ENCODE measurements at regions of chr19 and their contacts with region 1.

Region 1: DNA sequence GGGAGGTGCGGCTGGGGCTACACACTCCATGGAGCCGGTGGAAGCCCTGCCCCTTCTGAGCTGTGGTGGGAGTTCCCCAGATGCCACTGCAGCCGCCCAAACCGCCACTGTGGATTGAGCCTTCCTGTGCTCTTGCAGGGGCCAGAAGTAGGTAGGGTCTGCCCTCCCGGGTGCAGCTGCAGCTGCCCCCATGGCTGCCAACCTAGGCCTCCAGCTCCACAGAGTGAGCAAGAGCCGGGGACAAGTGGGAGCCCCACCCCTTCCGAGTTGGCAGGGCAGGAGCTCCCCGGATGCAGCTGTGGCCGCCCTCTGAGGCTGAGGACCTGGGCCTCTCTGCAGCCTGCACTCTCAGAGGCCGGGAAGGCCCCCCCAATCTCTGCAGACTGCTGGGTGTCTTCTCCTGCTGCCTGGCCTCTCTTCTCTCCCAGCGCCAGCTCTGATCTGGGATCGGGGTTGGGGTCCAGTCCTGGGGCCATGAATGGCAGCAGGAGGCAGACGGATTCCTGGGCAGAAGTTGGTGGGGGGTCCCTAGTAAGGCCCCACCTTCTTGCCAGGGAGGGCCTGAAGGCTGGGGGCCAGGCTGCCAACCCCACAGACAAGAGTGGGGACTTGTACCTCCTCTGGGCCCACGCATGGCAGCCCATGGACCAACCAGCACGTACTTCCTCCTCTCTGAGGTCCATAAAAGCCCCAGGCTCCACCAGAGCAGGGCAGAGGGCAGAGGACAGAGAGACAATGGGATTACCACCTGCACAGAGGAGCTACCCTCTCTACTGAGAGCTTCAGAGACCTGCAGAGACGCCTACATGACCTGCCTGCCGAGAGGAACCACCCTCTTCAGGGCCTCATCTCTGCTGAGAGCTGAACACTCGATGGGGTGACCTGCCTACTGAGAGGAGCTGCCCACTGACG is 28.9 kb downstream of the AP2S1 start:
- DNase-seq: no peak
- ATAC-seq: peak; percentile 81
- H3K4me3 ChIP-seq: peak overlapping the region; percentile 33; the same call in 1 of the 2 replicates
- H3K27ac ChIP-seq: peak overlapping the region; percentile 51
- H3K4me1 ChIP-seq: peaks cover 27% of the 10 kb centered on the region
- H3K27me3 ChIP-seq: no peaks in the 10 kb centered on the region
- CTCF ChIP-seq: no peak
- EP300 ChIP-seq: no peak
- POLR2A ChIP-seq: peak; percentile 55
- RAD21 ChIP-seq: no peak

Region 2: DNA sequence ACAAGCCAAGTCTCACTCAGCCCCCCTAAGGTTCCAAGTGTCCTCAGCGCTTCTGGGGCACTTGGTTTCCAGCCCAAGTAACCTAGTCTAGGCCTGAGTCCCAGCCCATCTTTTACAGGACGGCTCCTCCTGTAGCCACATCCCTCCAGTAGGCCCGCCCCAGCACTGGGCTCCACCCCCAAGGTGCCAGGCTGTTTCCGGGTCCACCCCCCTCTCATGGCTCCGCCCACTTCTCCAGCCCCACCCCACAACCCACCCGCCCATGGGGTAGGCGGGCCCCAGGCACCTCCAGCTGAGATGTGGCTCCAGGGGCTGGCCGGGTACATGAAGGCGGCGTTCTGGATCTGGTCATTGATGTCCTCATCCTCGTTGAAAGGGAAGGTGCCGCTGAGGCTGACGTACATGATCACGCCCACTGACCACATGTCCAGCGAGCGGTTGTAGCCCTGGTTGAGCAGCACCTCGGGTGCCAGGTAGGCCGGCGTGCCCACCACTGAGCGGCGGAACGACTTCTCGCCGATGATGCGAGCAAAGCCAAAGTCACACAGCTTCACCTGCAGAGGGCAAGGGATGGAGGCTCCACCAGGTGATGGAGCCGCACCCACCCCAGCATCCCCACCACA is 143.5 kb before region 1 on chr19:
- CTCF ChIA-PET with region 1: no interaction called
- POLR2A ChIA-PET with region 1: no interaction called
- RAD21 ChIA-PET with region 1: no interaction called
- SMC1A ChIA-PET with region 1: no interaction called
- in situ Hi-C with region 1: no loop called
- intact Hi-C with region 1: no loop called
- DNase-seq: no peak
- ATAC-seq: peak; percentile 99
- H3K4me3 ChIP-seq: no peak overlapping the region
- H3K27ac ChIP-seq: no peak overlapping the region
- H3K4me1 ChIP-seq: no peaks in the 10 kb centered on the region
- H3K27me3 ChIP-seq: no peaks in the 10 kb centered on the region
- CTCF ChIP-seq: no peak
- EP300 ChIP-seq: no peak
- POLR2A ChIP-seq: no peak
- RAD21 ChIP-seq: no peak

Region 3: GRCh38 chr19:46759817-46760333 is 61.9 kb before region 1 on chr19:
- CTCF ChIA-PET with region 1: interaction called, 9 read pairs
- POLR2A ChIA-PET with region 1: no interaction called
- RAD21 ChIA-PET with region 1: interaction called, 14 read pairs
- SMC1A ChIA-PET with region 1: interaction called, 6 read pairs
- in situ Hi-C with region 1: no loop called
- intact Hi-C with region 1: no loop called
- DNase-seq: no peak
- ATAC-seq: no peak
- H3K4me3 ChIP-seq: no peak overlapping the region
- H3K27ac ChIP-seq: no peak overlapping the region
- H3K4me1 ChIP-seq: no peaks in the 10 kb centered on the region
- H3K27me3 ChIP-seq: no peaks in the 10 kb centered on the region
- CTCF ChIP-seq: no peak
- EP300 ChIP-seq: no peak
- POLR2A ChIP-seq: no peak
- RAD21 ChIP-seq: no peak